ENCODE measurements at regions of chr14 and their contacts with region 1.

Region 1: DNA sequence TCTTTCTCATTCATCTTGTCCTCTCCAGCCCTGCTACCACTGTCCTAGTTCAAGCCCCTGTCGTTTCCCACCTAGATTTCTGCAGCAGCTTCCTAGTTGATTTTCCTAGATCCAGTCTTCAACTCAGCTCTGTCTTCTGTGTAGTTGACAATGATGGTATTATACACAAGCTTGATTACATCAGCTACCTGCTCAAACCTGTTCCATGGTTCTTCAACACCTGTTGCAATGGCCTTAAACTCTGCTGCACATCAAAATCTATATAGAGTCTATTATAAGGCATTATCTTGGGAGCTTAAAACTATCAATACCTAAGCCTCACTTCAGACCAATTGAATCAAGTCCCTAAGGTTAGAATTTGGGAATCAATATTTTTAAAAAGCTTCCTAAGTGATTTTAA is 71.7 kb upstream of the PELI2 start:
- DNase-seq: no peak
- H3K4me3 ChIP-seq: no peak overlapping the region
- H3K27ac ChIP-seq: no peak overlapping the region
- H3K4me1 ChIP-seq: no peaks in the 10 kb centered on the region
- H3K27me3 ChIP-seq: peaks cover 5% of the 10 kb centered on the region
- CTCF ChIP-seq: no peak

Region 2: DNA sequence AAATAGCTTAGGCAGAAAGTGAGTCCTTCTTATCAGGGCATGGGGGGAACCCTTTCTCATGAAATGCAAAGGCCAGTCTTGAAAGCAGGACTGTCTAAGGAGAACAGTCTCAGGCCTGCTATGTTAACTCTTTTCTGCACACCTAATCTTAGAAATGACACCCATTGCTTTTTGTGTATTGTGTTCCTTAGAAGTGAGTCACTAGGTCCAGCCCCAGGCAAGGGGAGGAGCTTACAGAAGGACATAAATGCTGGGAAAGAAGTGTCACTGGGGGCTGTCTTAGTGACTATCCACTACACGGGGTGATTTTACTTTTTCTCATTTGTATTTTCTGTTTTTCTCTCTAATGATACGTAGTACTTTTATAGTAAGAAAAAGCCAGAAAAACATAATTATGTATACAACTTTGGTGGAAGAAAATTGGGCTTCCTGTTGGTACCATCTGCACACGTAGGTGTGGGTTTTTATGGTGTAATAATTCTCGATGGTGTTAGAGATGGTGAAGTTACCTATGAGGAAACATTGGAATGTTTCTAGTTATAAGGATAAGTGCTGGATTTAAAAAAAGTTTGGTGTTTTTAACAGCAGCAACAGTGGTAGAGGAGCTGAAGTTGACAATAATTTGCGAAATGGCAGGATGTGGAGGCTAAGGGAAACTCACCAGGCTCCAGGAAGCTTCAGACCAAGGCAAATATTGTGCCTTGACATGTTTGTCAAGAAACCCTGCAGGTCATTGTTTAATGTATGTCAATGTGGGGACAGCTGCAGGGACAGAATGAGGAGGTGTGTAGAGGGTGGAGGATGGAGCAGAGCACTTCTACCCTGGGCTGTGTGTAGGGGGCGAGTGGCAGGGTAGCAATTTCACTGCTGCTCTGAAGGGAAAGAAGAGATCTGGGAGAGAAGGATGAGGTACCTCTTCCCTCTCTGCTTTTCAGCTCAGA is 251.6 kb before region 1 on chr14:
- CTCF ChIA-PET with region 1: no interaction called
- dilution Hi-C with region 1: no loop called
- in situ Hi-C with region 1: no loop called
- intact Hi-C with region 1: loop called (anchors 2 kb)
- DNase-seq: peak; percentile 52
- H3K4me3 ChIP-seq: no peak overlapping the region
- H3K27ac ChIP-seq: no peak overlapping the region
- H3K4me1 ChIP-seq: peaks cover 8% of the 10 kb centered on the region
- H3K27me3 ChIP-seq: no peaks in the 10 kb centered on the region
- CTCF ChIP-seq: no peak

Region 3: DNA sequence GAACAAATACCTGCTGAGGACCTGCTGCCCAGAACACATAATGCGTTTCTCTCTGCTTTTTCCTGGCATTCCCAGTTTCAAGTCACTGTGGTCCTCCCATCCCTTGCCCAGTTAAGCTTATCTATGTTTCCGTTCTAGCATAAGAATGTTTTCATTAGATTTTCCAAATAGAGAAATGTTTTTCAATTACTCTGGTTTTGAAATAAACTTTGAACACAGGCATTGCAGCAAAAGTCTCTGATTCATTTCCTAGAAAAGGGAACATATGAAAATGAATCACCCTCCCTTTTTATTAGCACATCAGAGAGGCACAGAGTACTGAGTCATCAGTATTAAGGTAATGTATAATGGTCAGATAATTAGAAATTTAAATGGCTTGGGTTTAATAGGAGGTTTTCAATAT is 331.9 kb after region 1 on chr14:
- CTCF ChIA-PET with region 1: no interaction called
- dilution Hi-C with region 1: no loop called
- in situ Hi-C with region 1: no loop called
- intact Hi-C with region 1: no loop called
- DNase-seq: peak; percentile 53
- H3K4me3 ChIP-seq: no peak overlapping the region
- H3K27ac ChIP-seq: no peak overlapping the region
- H3K4me1 ChIP-seq: peaks cover 7% of the 10 kb centered on the region
- H3K27me3 ChIP-seq: no peaks in the 10 kb centered on the region
- CTCF ChIP-seq: no peak

Region 4: GRCh38 chr14:56594428-56594827 is 547.9 kb after region 1 on chr14:
- CTCF ChIA-PET with region 1: no interaction called
- dilution Hi-C with region 1: no loop called
- in situ Hi-C with region 1: no loop called
- intact Hi-C with region 1: no loop called
- DNase-seq: no peak
- H3K4me3 ChIP-seq: no peak overlapping the region
- H3K27ac ChIP-seq: no peak overlapping the region
- H3K4me1 ChIP-seq: no peaks in the 10 kb centered on the region
- H3K27me3 ChIP-seq: no peaks in the 10 kb centered on the region
- CTCF ChIP-seq: no peak

Measured in mammary epithelial cell (primary cell).